Panc1 (cell line): ENCODE measurements at regions of chr22 and their contacts with region 1.

Region 1: DNA sequence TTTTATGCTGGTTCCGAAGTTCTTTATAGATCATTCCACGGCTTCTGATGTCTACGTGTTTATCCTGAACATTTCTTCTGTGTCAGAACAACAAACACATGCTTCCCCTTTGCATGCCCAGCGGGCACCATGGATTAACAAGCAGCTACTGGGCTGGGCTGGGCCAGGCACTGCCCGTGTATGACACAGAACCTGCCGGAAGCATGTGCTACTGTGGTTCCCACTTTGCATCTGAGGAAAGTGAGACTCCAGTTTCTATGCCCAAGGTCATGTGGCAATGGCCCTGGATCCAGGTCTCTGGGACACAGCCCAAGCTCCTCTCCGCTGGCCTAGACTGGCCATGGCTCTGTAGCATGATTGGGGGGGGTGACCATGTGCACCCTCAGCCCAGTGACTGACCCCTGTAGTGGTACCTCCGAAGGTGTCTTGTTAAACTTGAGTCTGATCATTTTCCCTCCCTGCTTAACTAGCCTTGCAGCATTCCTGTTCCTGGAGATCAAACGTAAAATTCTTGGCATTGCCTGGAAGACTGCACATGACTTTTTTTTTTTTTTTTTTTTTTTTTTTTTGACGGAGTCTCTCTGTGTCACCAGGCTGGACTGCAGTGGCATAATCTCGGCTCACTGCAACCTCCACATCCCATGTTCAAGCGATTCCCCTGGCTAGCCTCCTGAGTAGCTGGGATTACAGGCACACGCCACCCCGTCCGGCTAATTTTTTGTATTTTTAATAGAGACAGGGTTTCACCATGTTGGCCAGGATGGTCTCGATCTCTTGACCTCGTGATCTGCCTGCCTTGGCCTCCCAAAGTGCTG is 1116.0 kb downstream of the TBC1D22A start:
- DNase-seq: no peak
- ATAC-seq: no peak
- H3K4me3 ChIP-seq: no peak overlapping the region
- H3K27ac ChIP-seq: no peak overlapping the region
- H3K4me1 ChIP-seq: no peaks in the 10 kb centered on the region
- H3K27me3 ChIP-seq: no peaks in the 10 kb centered on the region
- CTCF ChIP-seq: no peak

Region 2: GRCh38 chr22:47859881-47860525 is 18.4 kb before region 1 on chr22:
- CTCF ChIA-PET with region 1: no interaction called
- POLR2A ChIA-PET with region 1: interaction called, 10 read pairs
- in situ Hi-C with region 1: no loop called
- intact Hi-C with region 1: no loop called
- DNase-seq: no peak
- ATAC-seq: no peak
- H3K4me3 ChIP-seq: no peak overlapping the region
- H3K27ac ChIP-seq: no peak overlapping the region
- H3K4me1 ChIP-seq: no peaks in the 10 kb centered on the region
- H3K27me3 ChIP-seq: no peaks in the 10 kb centered on the region
- CTCF ChIP-seq: no peak